A549 (cell line): ENCODE measurements at regions of chr17 and their contacts with region 1.

Region 1: DNA sequence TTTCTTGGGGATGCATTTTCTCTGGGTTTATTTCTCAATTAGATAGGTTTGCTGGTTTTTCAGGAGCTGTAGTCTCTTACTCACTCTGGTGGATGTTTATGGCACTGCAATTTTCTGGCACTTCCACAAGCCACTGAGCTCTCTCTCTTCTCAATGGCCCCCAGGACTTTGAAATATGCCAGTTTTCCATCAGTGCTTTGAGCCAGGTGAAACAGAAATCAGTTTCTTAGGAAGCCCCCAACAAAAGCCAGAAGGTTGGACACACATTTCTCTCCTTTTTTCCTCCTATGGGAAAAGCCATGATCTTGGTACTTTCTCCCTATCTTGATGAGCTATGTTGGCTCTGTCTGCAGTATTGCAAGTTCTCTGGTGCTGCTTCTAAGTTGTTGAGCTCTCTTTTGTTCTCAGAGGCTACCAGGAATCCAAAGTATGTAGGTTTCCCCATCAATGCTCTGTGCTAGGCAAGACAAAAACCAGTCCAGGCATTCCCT is 90.7 kb upstream of the SMIM36 start:
- DNase-seq: peak; percentile 40 to 60
- ATAC-seq: peak; percentile 73 to 89; a peak in 5 of 6 replicates
- H3K4me3 ChIP-seq: no peak overlapping the region
- H3K27ac ChIP-seq: no peak overlapping the region
- H3K4me1 ChIP-seq: peaks cover 2% of the 10 kb centered on the region; the same call in 2 of the 3 replicates
- CTCF ChIP-seq: peak; percentile 83
- EP300 ChIP-seq: no peak
- POLR2A ChIP-seq: no peak
- RAD21 ChIP-seq: peak; percentile 91 to 93

Region 2: DNA sequence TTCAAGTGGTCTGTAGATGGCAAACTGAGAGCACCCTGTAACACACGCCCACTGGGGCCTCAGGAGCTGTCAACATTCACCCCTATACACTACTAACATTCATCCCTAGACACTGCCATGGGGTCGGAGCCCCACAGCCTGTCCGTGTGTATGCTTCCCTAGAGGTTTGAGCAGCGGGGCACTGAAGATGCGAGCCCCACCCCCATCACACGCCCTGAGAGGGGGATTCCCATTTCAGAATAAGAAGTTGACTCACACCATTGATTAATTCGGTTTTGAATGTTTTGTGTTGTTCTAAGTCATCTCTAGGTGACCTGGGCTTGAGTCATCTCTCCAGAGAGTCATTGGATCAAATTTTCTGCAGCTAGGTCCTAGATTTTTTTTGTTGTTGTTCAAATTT is 142.9 kb before region 1 on chr17:
- CTCF ChIA-PET with region 1: no interaction called
- POLR2A ChIA-PET with region 1: no interaction called
- DNase-seq: peak in 1 of 2 experiments; percentile 61
- ATAC-seq: peak in 1 of 2 experiments; percentile 3; a peak in 2 of 6 replicates
- H3K4me3 ChIP-seq: no peak overlapping the region
- H3K27ac ChIP-seq: peak overlapping the region; percentile 62 to 92; a peak in 5 of 6 replicates
- H3K4me1 ChIP-seq: peaks cover 53% of the 10 kb centered on the region
- CTCF ChIP-seq: no peak
- EP300 ChIP-seq: no peak
- POLR2A ChIP-seq: no peak
- RAD21 ChIP-seq: no peak

Region 3: GRCh38 chr17:55549140-55549539 is 52.8 kb before region 1 on chr17:
- CTCF ChIA-PET with region 1: interaction called, 12 read pairs
- POLR2A ChIA-PET with region 1: no interaction called
- DNase-seq: peak in 1 of 2 experiments; percentile 39
- ATAC-seq: peak in 1 of 2 experiments; percentile 71; a peak in 3 of 6 replicates
- H3K4me3 ChIP-seq: no peak overlapping the region
- H3K27ac ChIP-seq: no peak overlapping the region
- H3K4me1 ChIP-seq: no peaks in the 10 kb centered on the region
- CTCF ChIP-seq: peak; percentile 28; the same call in 1 of the 3 replicates
- EP300 ChIP-seq: no peak
- POLR2A ChIP-seq: no peak
- RAD21 ChIP-seq: peak; percentile 27 to 41; a peak in 4 of 5 replicates

Region 4: GRCh38 chr17:55587608-55588139 is 14.2 kb before region 1 on chr17:
- CTCF ChIA-PET with region 1: interaction called, 26 read pairs
- POLR2A ChIA-PET with region 1: no interaction called
- DNase-seq: no peak
- ATAC-seq: no peak
- H3K4me3 ChIP-seq: no peak overlapping the region
- H3K27ac ChIP-seq: peak overlapping the region in 1 of 2 experiments; percentile 35; a peak in 3 of 6 replicates
- H3K4me1 ChIP-seq: peaks cover 39% of the 10 kb centered on the region
- CTCF ChIP-seq: no peak
- EP300 ChIP-seq: no peak
- POLR2A ChIP-seq: no peak
- RAD21 ChIP-seq: no peak

Region 5: DNA sequence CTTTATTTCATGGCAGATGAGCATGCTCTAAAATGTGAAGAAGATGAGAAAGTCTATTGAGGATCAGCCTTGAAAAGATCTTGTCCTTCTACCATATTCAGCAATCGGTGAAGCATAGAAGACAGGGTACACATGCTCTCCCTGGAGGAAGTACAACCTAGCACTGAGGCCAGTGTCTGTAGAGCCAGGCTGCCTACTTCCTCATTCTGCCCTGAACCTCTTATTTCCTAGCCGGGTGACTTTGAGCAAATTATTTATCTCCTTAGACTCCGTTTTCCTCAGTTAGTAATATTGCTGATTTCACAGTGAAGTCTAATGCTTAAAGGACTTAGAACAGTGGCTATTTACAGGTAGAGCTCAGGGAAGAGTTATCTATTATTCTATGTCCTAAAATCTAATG is 62.4 kb after region 1 on chr17:
- CTCF ChIA-PET with region 1: no interaction called
- POLR2A ChIA-PET with region 1: no interaction called
- DNase-seq: no peak
- ATAC-seq: no peak
- H3K4me3 ChIP-seq: no peak overlapping the region
- H3K27ac ChIP-seq: no peak overlapping the region
- H3K4me1 ChIP-seq: no peaks in the 10 kb centered on the region
- CTCF ChIP-seq: no peak
- EP300 ChIP-seq: no peak
- POLR2A ChIP-seq: no peak
- RAD21 ChIP-seq: no peak